Transverse colon (tissue), 4 donors: ENCODE measurements at regions of chr6 and their contacts with region 1.

Region 1: GRCh38 chr6:107989166-107990094 is 31.4 kb upstream of the SEC63 start:
- DNase-seq: no peak
- H3K4me3 ChIP-seq: no peak overlapping the region
- H3K27ac ChIP-seq: no peak overlapping the region
- H3K4me1 ChIP-seq: no peaks in the 10 kb centered on the region
- H3K27me3 ChIP-seq: no peaks in the 10 kb centered on the region
- CTCF ChIP-seq: no peak
- EP300 ChIP-seq: no peak
- POLR2A ChIP-seq: no peak

Region 2: GRCh38 chr6:108039681-108040080 is 50.3 kb after region 1 on chr6:
- in situ Hi-C with region 1: loop called in 1 of 4 experiments (anchors 10 kb)
- intact Hi-C with region 1: no loop called
- DNase-seq: no peak
- H3K4me3 ChIP-seq: no peak overlapping the region
- H3K27ac ChIP-seq: no peak overlapping the region
- H3K4me1 ChIP-seq: no peaks in the 10 kb centered on the region
- H3K27me3 ChIP-seq: no peaks in the 10 kb centered on the region
- CTCF ChIP-seq: no peak
- EP300 ChIP-seq: no peak
- POLR2A ChIP-seq: no peak

Region 3: GRCh38 chr6:108091288-108091687 is 101.9 kb after region 1 on chr6:
- in situ Hi-C with region 1: no loop called
- intact Hi-C with region 1: no loop called
- DNase-seq: no peak
- H3K4me3 ChIP-seq: no peak overlapping the region
- H3K27ac ChIP-seq: no peak overlapping the region
- H3K4me1 ChIP-seq: no peaks in the 10 kb centered on the region
- H3K27me3 ChIP-seq: peaks cover 16% of the 10 kb centered on the region
- CTCF ChIP-seq: no peak
- EP300 ChIP-seq: no peak
- POLR2A ChIP-seq: no peak